Panc1 (cell line): ENCODE measurements at regions of chr3 and their contacts with region 1.

Region 1: GRCh38 chr3:145981056-145981455 is 179.9 kb downstream of the PLOD2 start:
- DNase-seq: no peak
- ATAC-seq: no peak
- H3K4me3 ChIP-seq: no peak overlapping the region
- H3K27ac ChIP-seq: no peak overlapping the region
- H3K4me1 ChIP-seq: no peaks in the 10 kb centered on the region
- H3K27me3 ChIP-seq: no peaks in the 10 kb centered on the region
- CTCF ChIP-seq: no peak

Region 2: GRCh38 chr3:145963111-145963510 is 17.9 kb before region 1 on chr3:
- CTCF ChIA-PET with region 1: no interaction called
- POLR2A ChIA-PET with region 1: interaction called, 11 read pairs
- in situ Hi-C with region 1: no loop called
- intact Hi-C with region 1: no loop called
- DNase-seq: no peak
- ATAC-seq: no peak
- H3K4me3 ChIP-seq: no peak overlapping the region
- H3K27ac ChIP-seq: no peak overlapping the region
- H3K4me1 ChIP-seq: no peaks in the 10 kb centered on the region
- H3K27me3 ChIP-seq: no peaks in the 10 kb centered on the region
- CTCF ChIP-seq: no peak

Region 3: DNA sequence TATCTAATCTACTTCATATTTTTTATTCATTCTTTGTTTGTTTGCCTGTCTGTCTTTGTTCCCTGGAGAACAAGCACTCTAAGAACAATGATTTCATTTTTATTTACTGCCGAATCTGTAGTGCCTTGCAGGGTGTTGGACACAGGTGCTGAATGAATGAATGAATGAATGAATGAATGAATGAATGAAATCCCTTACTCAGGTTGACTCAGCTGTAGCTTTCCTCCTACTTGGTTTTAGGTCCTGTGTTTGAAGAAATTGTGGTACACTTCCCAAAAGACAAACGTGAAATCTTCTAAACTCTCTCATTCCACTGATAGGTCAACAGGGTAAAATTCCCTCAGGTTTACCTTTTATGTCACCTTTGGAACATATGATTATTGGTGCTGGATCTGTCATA is 10.1 kb after region 1 on chr3:
- CTCF ChIA-PET with region 1: no interaction called
- POLR2A ChIA-PET with region 1: no interaction called
- in situ Hi-C with region 1: no loop called
- intact Hi-C with region 1: no loop called
- DNase-seq: no peak
- ATAC-seq: no peak
- H3K4me3 ChIP-seq: no peak overlapping the region
- H3K27ac ChIP-seq: no peak overlapping the region
- H3K4me1 ChIP-seq: no peaks in the 10 kb centered on the region
- H3K27me3 ChIP-seq: no peaks in the 10 kb centered on the region
- CTCF ChIP-seq: no peak